PC-3 (cell line): ENCODE measurements at regions of chr5 and their contacts with region 1.

Region 1: GRCh38 chr5:145362261-145362660 is 472.9 kb downstream of the PRELID2 start:
- DNase-seq: peak; percentile 75
- ATAC-seq: peak; percentile 97
- H3K4me3 ChIP-seq: no peak overlapping the region
- H3K27ac ChIP-seq: peak overlapping the region; percentile 11; the same call in 1 of the 2 replicates
- H3K4me1 ChIP-seq: peaks cover 15% of the 10 kb centered on the region
- H3K27me3 ChIP-seq: no peaks in the 10 kb centered on the region
- CTCF ChIP-seq: no peak

Region 2: DNA sequence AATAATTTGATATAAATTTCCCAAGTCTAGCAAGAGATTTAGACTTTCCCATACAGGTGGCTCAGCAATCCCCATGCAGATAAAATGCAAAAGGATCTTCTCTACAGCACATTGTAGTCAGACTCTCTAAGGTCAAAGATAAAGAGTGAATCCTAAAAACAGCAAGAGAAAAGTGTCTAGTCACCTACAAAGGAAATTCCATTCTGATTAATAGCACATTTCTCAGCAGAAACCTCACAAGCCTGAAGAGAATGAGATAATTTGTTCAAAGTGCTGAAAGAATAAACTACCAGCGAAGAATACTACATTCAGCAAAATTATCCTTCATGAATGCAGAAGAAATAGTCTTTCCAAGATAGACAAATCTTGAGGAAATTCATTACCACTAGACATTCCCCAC is 20.4 kb before region 1 on chr5:
- CTCF ChIA-PET with region 1: no interaction called
- POLR2A ChIA-PET with region 1: no interaction called
- intact Hi-C with region 1: no loop called
- DNase-seq: no peak
- ATAC-seq: no peak
- H3K4me3 ChIP-seq: no peak overlapping the region
- H3K27ac ChIP-seq: no peak overlapping the region
- H3K4me1 ChIP-seq: no peaks in the 10 kb centered on the region
- H3K27me3 ChIP-seq: no peaks in the 10 kb centered on the region
- CTCF ChIP-seq: no peak

Region 3: DNA sequence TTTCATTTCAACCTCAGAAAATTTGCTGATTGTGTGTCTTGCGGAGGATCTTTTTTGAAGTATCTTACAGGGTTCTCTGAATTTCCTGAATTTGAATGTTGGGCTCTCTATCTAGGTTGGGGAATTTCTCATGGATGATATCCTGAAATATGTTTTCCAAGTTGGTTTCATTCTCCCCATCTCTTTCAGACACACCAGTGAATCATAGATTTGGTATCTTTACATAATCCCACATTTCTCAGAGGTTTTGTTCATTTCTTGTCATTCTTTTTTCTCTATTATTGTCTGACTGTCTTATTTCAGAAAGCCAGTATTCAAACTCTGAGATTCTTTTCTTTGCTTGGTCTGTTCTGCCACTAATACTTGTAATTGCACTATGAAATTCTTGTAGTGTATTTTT is 16.0 kb after region 1 on chr5:
- CTCF ChIA-PET with region 1: no interaction called
- POLR2A ChIA-PET with region 1: no interaction called
- intact Hi-C with region 1: no loop called
- DNase-seq: no peak
- ATAC-seq: no peak
- H3K4me3 ChIP-seq: no peak overlapping the region
- H3K27ac ChIP-seq: no peak overlapping the region
- H3K4me1 ChIP-seq: no peaks in the 10 kb centered on the region
- H3K27me3 ChIP-seq: no peaks in the 10 kb centered on the region
- CTCF ChIP-seq: no peak

Region 4: DNA sequence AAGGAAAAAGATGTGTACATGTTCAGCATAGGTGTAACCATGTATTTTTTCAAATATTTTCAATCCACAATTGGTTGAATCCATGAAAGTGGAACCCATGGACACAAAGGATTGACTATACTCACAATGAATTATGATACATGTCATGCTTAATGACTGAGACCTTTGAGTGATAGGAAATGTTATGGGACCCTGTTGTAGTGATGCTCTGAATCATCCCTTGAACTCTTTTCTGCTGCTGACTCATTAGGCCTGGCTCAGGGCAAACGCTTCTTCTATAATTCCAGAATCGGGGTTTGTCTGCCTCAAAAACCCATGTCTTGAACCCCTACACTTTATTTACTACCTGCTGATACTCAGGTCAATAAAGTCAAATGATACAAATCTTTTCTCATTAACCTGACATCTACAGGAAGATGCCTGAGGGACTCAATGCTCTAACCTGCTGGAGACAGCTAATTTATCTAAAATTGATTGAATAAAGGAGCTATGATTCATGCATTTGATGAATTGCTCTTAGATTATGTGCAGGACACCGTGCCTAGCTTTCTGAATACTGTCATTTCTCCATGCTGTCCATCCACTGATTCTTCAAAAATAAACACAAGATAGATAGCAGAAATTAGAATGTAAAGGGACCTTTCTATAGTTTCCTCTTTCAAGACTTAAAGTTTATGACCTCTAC is 212.8 kb after region 1 on chr5:
- CTCF ChIA-PET with region 1: no interaction called
- POLR2A ChIA-PET with region 1: no interaction called
- intact Hi-C with region 1: loop called (anchors 5 kb)
- DNase-seq: no peak
- ATAC-seq: no peak
- H3K4me3 ChIP-seq: no peak overlapping the region
- H3K27ac ChIP-seq: no peak overlapping the region
- H3K4me1 ChIP-seq: peaks cover 6% of the 10 kb centered on the region; the same call in 1 of the 2 replicates
- H3K27me3 ChIP-seq: no peaks in the 10 kb centered on the region
- CTCF ChIP-seq: no peak